ENCODE measurements at regions of chr10 and their contacts with region 1.

Region 1: GRCh38 chr10:6920072-6921019 is 340.3 kb upstream of the PRKCQ start:
- DNase-seq: peak; percentile 88
- ATAC-seq: peak; percentile 99
- H3K4me3 Mint-ChIP-seq: no peak overlapping the region
- H3K27ac Mint-ChIP-seq: no peak overlapping the region
- H3K4me1 Mint-ChIP-seq: peaks cover 34% of the 10 kb centered on the region
- H3K27me3 Mint-ChIP-seq: peaks cover 4% of the 10 kb centered on the region

Region 2: DNA sequence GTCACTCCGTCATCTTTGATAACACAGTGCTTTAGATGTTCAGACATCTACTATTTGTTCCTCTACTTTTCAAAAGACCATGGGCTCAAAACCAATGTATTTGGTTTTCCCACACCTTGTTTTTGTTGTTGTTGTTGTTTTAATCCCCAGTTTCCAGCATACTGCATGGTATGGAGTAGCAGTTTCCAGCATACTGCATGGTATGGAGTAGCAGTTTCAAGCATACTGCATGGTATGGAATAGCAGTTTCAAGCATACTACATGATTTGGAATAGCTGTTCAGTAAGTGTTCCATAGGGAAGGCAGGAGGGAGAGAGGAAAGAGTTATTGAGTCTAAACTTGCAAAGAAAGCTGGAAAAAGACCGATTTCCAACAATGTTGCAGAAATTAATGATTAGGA is 25.9 kb before region 1 on chr10:
- CTCF ChIA-PET with region 1: no interaction called
- POLR2A ChIA-PET with region 1: no interaction called
- DNase-seq: no peak
- ATAC-seq: no peak
- H3K4me3 Mint-ChIP-seq: no peak overlapping the region
- H3K27ac Mint-ChIP-seq: no peak overlapping the region
- H3K4me1 Mint-ChIP-seq: no peaks in the 10 kb centered on the region
- H3K27me3 Mint-ChIP-seq: peaks cover 21% of the 10 kb centered on the region

Region 3: GRCh38 chr10:7035126-7035761 is 114.9 kb after region 1 on chr10:
- CTCF ChIA-PET with region 1: interaction called, 17 read pairs
- POLR2A ChIA-PET with region 1: no interaction called
- DNase-seq: peak; percentile 53
- ATAC-seq: peak; percentile 59
- H3K4me3 Mint-ChIP-seq: no peak overlapping the region
- H3K27ac Mint-ChIP-seq: peak overlapping the region; percentile 81
- H3K4me1 Mint-ChIP-seq: peaks cover 68% of the 10 kb centered on the region
- H3K27me3 Mint-ChIP-seq: peaks cover 8% of the 10 kb centered on the region

Region 4: DNA sequence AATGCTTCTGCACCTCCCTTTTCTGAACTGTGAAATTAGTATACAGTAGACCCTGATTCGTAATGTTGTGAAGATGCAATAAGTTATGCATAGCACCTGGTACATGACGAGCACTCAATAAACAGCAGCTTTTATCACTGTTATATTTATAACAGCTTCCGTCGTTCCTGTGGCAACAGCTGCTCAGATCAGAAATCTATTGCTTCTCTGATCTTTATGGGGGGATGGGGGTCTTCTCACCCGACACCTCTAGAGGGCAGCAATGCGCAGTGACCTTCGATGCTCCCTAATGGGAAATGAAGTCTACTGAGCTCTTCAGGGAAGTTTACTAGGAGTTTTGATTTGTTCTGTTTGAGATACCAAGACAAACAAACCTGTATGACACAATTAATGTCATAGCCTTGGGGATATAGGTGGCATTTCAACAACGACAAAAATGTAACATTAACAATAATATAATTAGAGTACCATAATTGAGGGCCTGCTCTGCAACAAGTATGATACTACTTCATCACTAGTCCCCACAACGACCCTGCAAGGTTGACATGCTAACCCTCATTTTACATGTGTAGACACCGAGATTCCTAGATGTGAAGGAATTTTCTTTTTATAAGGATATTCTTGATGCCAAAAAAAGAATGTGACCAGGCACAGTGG is 200.9 kb after region 1 on chr10:
- CTCF ChIA-PET with region 1: interaction called, 63 read pairs
- POLR2A ChIA-PET with region 1: no interaction called
- DNase-seq: peak; percentile 83
- ATAC-seq: peak; percentile 91
- H3K4me3 Mint-ChIP-seq: no peak overlapping the region
- H3K27ac Mint-ChIP-seq: no peak overlapping the region
- H3K4me1 Mint-ChIP-seq: peaks cover 5% of the 10 kb centered on the region
- H3K27me3 Mint-ChIP-seq: peaks cover 40% of the 10 kb centered on the region

Region 5: DNA sequence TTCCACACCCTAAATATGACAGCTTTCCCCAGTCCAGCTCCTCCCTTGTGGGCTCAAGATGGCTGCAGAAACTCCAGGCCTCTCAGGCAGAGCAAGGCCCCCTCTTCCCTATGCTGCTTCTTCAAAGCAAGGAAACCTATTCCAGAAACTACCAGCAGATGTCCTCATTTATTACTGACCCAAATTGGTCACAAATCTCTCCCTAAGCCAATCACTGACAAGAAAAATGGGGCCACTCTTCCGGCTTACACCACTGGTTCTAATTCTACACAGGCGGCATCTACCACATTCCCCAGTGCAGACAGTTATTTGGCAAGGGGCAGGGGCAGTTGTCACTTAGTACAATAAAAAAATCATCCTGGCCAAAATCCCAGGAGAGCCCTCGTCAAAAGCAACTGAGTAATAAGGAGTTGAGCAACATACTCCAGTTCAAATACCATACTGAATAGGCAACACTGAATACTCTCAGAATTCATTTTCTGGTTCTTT is 340.1 kb after region 1 on chr10:
- CTCF ChIA-PET with region 1: interaction called, 11 read pairs
- POLR2A ChIA-PET with region 1: no interaction called
- DNase-seq: peak; percentile 40
- ATAC-seq: no peak
- H3K4me3 Mint-ChIP-seq: no peak overlapping the region
- H3K27ac Mint-ChIP-seq: peak overlapping the region; percentile 80
- H3K4me1 Mint-ChIP-seq: peaks cover 62% of the 10 kb centered on the region
- H3K27me3 Mint-ChIP-seq: no peaks in the 10 kb centered on the region

Region 6: DNA sequence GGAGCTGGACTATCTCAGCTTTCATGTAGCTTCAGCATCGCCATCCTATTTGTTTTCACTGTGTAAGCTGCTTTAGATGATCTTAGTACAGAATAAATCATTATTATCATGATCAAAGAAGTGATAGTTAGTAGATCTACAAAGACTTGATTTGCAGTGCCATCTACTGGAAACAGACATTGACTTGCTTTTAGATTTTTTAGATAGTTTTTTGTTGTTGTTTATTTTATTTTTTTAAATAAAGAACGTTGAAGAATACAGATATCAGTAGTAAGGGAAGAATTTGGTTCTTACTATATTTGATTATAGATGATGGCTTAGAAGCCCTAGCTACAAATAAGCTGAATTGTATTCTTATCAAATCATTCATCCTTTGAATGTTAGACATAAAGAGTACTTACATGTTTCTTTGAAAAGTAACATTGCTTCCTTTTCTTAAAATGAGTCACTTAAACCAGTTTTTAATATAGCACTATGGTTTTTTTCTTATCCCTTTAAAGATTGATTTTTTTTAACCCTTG is 496.8 kb after region 1 on chr10:
- CTCF ChIA-PET with region 1: interaction called, 63 read pairs
- POLR2A ChIA-PET with region 1: no interaction called
- DNase-seq: no peak
- ATAC-seq: peak; percentile 37
- H3K4me3 Mint-ChIP-seq: no peak overlapping the region
- H3K27ac Mint-ChIP-seq: peak overlapping the region; percentile 69
- H3K4me1 Mint-ChIP-seq: peaks cover 46% of the 10 kb centered on the region
- H3K27me3 Mint-ChIP-seq: peaks cover 16% of the 10 kb centered on the region